ENCODE measurements at regions of chr14 and their contacts with region 1.

Region 1: GRCh38 chr14:105430535-105430934 is 10.9 kb downstream of the MTA1 start:
- DNase-seq: peak; percentile 90
- H3K4me3 ChIP-seq: no peak overlapping the region
- H3K27ac ChIP-seq: peak overlapping the region; percentile 86
- H3K4me1 ChIP-seq: peaks cover 34% of the 10 kb centered on the region
- H3K27me3 ChIP-seq: no peaks in the 10 kb centered on the region
- CTCF ChIP-seq: no peak
- POLR2A ChIP-seq: peak; percentile 20

Region 2: DNA sequence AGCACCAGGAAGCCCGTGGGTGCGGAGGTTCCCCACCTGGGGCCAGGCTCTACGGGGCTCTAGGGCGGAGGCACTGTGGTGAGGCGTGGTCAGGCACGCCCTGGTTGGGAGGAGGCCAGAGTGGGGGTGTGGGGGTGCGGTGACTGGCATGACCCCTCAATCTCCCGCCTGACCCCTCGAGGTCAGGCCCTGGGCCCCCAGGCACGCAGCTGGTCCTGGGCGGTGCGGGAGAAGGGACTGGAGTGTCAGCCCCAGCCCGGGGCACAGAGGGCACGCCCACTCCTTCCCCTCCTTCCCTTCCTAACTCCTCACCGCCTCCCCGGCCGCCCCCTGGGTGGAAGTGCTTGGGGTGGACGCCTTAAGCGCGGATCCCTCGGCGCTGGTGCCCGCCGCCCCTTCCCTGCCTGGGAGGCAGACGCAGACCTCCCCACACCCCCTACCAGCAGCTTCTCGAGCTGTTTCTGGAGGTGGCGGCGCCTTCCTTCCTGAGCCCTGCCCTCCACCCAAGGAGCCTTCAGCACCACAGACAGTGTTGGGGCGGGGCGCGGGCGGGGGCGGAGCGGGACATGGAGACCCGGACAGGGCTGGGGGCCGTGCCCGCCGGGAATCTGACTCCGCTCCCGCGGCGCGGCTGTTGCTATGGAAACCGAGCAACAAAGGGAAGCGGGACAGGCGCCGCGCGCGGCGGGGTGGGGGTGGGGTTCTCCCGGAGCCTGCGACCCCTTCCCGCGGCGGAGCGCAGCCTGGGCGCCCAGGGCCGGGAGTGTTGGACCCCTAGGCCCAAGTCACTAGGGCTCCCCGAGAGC is 43.3 kb after region 1 on chr14:
- CTCF ChIA-PET with region 1: no interaction called
- POLR2A ChIA-PET with region 1: interaction called, 3 read pairs
- dilution Hi-C with region 1: no loop called
- intact Hi-C with region 1: loop called (anchors 1 kb)
- DNase-seq: peak; percentile 91
- H3K4me3 ChIP-seq: peak overlapping the region; percentile 21 to 93 (median 34)
- H3K27ac ChIP-seq: peak overlapping the region; percentile 90
- H3K4me1 ChIP-seq: peaks cover 19% of the 10 kb centered on the region
- H3K27me3 ChIP-seq: no peaks in the 10 kb centered on the region
- CTCF ChIP-seq: no peak
- POLR2A ChIP-seq: no peak

Measured in endothelial cell of umbilical vein (primary cell).